ENCODE measurements at regions of chr3 and their contacts with region 1.

Region 1: DNA sequence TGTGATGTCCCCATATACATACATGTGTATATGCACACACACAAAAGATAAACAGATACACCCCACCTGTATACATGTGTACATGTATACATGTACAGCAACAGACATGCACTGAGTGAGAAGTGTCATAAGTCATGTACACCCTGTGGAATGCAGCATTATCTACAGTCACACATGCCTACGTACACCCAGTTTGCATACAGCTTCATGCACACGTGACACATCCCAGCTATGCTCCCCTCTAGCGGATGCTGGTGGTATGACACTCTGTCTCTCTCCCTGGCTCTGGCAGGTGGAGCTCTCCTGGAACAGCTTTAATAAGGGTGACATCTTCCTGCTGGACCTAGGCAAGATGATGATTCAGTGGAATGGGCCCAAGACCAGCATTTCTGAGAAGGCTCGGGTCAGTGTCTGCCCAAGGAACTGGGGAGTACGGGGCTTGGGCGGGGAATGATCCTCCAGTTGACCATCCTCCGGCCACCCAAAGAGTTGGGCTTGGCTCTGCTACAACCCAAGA is 6.3 kb downstream of the VILL start:
- DNase-seq: peak; percentile 80
- ATAC-seq: peak; percentile 72
- H3K4me3 ChIP-seq: no peak overlapping the region
- H3K27ac ChIP-seq: no peak overlapping the region
- H3K4me1 ChIP-seq: peaks cover 76% of the 10 kb centered on the region
- H3K27me3 ChIP-seq: peaks cover 0 to 22% of the 10 kb centered on the region in 2 experiments; a peak in 2 of 5 replicates
- CTCF ChIP-seq: peak; percentile 92
- EP300 ChIP-seq: no peak
- POLR2A ChIP-seq: no peak
- RAD21 ChIP-seq: peak; percentile 57

Region 2: GRCh38 chr3:37974121-37975083 is 22.4 kb before region 1 on chr3:
- CTCF ChIA-PET with region 1: interaction called, 10 read pairs
- POLR2A ChIA-PET with region 1: no interaction called
- in situ Hi-C with region 1: no loop called
- intact Hi-C with region 1: no loop called
- DNase-seq: peak; percentile 56
- ATAC-seq: peak; percentile 93
- H3K4me3 ChIP-seq: no peak overlapping the region
- H3K27ac ChIP-seq: no peak overlapping the region
- H3K4me1 ChIP-seq: peaks cover 22% of the 10 kb centered on the region
- H3K27me3 ChIP-seq: no peaks in the 10 kb centered on the region
- CTCF ChIP-seq: peak; percentile 88
- EP300 ChIP-seq: no peak
- POLR2A ChIP-seq: no peak
- RAD21 ChIP-seq: 0 out of 2 replicates have a peak, but pooled peaks have one; percentile 44

Region 3: DNA sequence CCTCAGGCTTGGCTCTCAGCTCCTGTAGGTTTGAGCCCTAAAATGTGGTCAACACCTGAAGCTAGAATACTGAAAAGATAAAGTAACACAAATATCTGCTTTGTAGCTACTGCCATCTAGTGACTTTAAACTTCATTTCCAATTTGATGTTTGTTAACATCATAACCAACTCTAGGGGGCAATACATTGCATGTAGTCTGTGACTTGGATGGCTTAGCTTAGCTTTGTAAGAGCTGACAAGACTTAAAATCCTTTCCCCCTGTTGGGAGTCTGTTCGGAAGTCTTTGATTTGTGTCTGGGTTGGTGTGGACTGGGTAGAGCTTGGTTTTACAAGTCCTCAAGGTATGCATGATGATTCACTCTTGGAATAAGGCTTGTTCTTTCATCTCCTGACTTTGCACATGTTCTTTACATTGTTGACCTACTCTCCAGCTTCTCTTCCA is 1003.2 kb after region 1 on chr3:
- CTCF ChIA-PET with region 1: no interaction called
- POLR2A ChIA-PET with region 1: no interaction called
- in situ Hi-C with region 1: no loop called
- intact Hi-C with region 1: no loop called
- DNase-seq: peak; percentile 60
- ATAC-seq: peak; percentile 82
- H3K4me3 ChIP-seq: no peak overlapping the region
- H3K27ac ChIP-seq: no peak overlapping the region
- H3K4me1 ChIP-seq: peaks cover under 1% of the 10 kb centered on the region; the same call in 1 of the 2 replicates
- H3K27me3 ChIP-seq: peaks cover 0 to 7% of the 10 kb centered on the region in 2 experiments; a peak in 2 of 5 replicates
- CTCF ChIP-seq: peak; percentile 88
- EP300 ChIP-seq: no peak
- POLR2A ChIP-seq: no peak
- RAD21 ChIP-seq: 0 out of 2 replicates have a peak, but pooled peaks have one; percentile 37

Measured in HepG2 (cell line).